BJ (cell line): ENCODE measurements at regions of chr19 and their contacts with region 1.

Region 1: GRCh38 chr19:14073261-14073924 is 807 bp downstream of the MISP3 start:
- DNase-seq: no peak
- H3K4me3 ChIP-seq: peak overlapping the region; percentile 63
- H3K27me3 ChIP-seq: no peaks in the 10 kb centered on the region
- CTCF ChIP-seq: peak; percentile 16

Region 2: DNA sequence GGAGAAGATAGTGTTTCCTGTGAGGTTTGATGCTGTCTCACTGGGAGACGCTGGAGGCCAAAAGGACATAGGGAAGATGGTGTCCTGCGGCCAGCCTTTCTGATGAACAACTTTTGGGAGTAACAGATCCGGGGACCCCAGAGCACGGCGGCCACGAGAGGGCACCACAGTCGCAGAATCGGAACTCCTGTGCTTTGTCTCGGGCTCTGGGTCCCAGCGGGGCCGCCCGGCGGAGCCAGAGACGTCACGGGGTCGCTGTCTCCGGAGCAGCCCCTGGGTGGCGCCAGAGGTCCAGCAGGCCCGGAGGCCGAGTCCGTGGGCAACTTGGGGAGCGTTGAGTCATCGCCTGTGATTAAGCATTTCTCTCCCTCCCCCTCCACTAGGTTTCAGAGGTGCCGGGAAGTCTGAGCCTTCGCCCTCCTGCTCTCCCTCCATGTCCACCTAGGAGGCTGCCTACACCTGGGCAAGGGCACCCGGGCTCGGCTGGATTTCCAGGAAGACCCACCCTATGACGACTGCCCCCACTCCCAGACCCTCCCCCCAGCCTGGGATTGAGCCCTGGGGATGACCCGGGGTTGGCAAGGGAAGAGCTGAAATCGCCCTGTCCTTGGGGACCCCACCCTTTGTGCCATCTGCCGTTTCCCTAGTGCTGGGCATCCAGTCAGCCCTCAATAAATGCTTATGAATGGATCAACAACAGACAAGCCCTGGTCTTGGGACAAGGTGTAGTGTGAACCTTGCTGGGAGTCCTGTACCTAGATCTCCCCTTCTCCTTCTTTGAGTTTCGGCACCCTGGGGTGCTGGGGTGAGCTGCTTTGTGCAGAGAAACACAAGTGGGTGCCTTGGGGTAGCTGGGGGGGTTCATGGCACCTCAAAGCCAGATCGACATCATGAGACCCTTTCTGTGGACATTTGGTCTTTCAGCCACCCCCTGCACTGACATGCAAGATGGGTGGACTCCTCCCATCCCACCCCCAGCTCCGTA is 193.0 kb before region 1 on chr19:
- CTCF ChIA-PET with region 1: interaction called, 89 read pairs
- POLR2A ChIA-PET with region 1: no interaction called
- DNase-seq: peak; percentile 73
- H3K4me3 ChIP-seq: no peak overlapping the region
- H3K27me3 ChIP-seq: no peaks in the 10 kb centered on the region
- CTCF ChIP-seq: peak; percentile 99

Region 3: GRCh38 chr19:13952154-13953035 is 121.0 kb before region 1 on chr19 and contains the start of gene DCAF15:
- CTCF ChIA-PET with region 1: interaction called, 16 read pairs
- POLR2A ChIA-PET with region 1: no interaction called
- DNase-seq: peak; percentile 98
- H3K4me3 ChIP-seq: peak within 1 kb of the TSS; percentile 91
- H3K27me3 ChIP-seq: no peaks in the 10 kb centered on the region
- CTCF ChIP-seq: no peak
- polyA plus RNA-seq, gene DCAF15: 11.0 and 20.0 TPM in 2 replicates

Region 4: DNA sequence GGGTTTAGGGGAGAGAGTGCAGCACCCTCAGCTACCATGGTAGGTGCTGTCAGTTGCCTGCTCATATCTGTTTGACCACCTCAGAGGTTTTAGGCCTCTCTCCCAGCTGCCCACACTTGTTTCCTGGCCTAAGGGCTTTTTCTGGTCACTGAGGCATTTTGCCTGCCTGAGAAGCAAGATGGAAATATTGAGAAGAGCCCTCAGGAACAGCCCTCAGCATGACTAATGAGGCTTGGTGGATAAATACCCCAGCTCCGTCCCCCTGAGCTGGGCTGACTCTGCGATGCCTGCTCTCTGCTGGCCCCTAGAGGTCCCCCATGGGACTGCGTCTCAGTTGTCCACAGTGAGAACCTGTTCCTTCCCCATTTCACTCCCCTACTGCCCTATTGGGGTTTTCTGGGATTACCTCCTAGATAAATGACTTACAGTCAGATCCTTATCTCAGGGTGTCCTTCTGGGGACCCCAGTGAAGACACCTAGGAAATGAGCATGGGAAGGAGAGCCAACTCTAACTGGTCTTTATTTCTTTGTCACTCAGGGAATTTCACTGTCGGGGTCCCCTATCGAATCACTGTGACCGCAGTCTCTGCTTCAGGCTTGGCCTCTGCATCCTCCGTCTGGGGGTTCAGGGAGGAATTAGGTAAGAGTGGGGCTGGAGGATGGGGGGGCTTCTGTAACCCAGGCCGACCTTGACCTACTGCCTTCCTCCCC is 24.8 kb before region 1 on chr19:
- CTCF ChIA-PET with region 1: interaction called, 16 read pairs
- POLR2A ChIA-PET with region 1: no interaction called
- DNase-seq: no peak
- H3K4me3 ChIP-seq: no peak overlapping the region
- H3K27me3 ChIP-seq: no peaks in the 10 kb centered on the region
- CTCF ChIP-seq: peak; percentile 89

Region 5: DNA sequence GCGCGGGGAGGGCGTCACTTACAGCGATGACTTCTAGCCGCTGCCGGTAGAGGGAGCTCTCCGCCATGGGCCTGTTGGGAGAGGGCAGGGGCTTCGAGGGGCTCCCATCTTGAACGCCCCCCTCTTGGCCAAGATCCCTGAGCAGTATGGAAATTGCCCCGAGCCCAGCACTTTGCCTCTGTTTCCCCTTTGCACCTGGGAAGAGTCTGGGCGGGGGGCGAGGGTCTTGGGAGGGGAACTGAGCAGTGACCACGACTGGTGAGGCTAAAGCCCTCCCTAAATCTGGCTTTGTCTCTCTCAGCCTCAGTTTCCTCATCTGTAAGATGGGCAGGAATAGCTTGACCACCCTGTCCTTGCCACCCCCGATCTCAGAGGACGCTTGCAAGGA is 14.3 kb before region 1 on chr19:
- CTCF ChIA-PET with region 1: interaction called, 115 read pairs
- POLR2A ChIA-PET with region 1: no interaction called
- DNase-seq: no peak
- H3K4me3 ChIP-seq: no peak overlapping the region
- H3K27me3 ChIP-seq: peaks cover 8% of the 10 kb centered on the region; the same call in 1 of the 2 replicates
- CTCF ChIP-seq: peak; percentile 90

Region 6: DNA sequence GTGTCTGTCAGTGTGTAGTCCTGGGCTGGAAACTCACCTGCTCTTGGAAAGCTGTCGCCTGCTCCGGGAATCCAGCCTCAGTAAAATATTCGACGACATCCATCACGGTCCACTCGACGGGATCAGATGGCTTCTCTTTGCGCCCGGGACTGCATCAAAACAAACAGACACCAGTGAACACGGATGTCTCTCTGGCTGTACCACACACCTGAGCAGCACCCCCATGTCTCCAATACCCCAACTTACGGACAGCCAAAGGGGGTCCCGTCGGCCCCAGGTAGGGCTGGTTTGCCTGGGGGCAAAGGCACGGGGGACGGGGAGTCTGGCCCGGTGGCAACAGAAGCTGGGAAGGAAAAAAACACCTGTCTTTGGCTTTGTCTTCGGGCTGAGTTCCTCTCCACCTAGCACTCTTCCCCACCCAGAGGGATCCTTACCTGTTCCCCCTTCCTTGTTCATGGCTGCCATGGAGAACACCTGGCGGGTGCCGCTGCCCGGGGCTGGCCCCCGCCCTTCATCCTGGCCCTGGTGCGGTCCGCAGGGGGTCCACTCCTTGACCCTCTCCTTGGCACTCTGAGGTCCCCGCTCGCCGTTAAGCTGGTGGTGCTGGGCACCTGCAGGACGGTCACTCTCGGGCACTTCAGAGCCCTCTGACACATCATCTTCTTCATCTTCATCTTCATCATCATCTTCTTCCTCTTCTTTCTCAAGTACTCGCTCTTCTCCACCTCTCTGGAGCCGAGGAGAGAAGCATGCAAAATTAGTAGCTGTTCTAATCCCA is 15.4 kb after region 1 on chr19:
- CTCF ChIA-PET with region 1: interaction called, 10 read pairs
- POLR2A ChIA-PET with region 1: no interaction called
- DNase-seq: no peak
- H3K4me3 ChIP-seq: peak overlapping the region; percentile 78; the same call in 1 of the 2 replicates
- H3K27me3 ChIP-seq: no peaks in the 10 kb centered on the region
- CTCF ChIP-seq: no peak